Right ventricle myocardium inferior (tissue), 1 donor: ENCODE measurements at regions of chr12 and their contacts with region 1.

Region 1: GRCh38 chr12:2812290-2813213 is at the start of gene ITFG2:
- DNase-seq: peak; percentile 100
- ATAC-seq: peak; percentile 99
- total RNA-seq, gene ITFG2: 11.4 TPM

Region 2: GRCh38 chr12:2794736-2795289 is 17.7 kb before region 1 on chr12 and contains the start of gene FKBP4:
- intact Hi-C with region 1: loop called (anchors 1 kb)
- DNase-seq: peak; percentile 95
- ATAC-seq: peak; percentile 94
- total RNA-seq, gene FKBP4: 64.1 TPM